Posterior cingulate gyrus (tissue), 11 donors: ENCODE measurements at regions of chr10 and their contacts with region 1.

Region 1: DNA sequence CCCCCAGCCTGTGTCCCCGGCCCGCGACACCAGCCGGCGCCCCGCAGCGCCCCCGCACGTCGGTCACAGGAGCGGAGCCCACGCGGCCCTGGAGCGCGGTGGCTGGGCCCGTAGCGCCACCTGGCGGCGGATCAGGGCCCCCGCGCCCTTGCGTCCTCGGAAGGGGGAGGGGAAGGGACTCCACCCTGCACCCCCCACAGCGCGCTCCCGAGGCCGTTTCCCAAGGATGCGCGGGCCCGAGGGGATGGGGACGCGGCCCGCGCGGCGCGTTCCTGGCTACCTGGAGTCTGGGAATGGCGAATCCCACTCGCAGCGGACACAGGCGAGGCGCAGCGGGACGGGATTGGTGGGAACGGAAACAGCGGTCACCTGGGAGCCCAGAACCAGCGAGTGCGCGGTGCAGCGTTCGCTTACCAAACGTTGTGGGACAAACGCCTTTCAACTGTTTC is 23.8 kb upstream of the MKI67 start:
- DNase-seq: peak in 9 of 10 donors; percentile 51 to 94 (median 55)

Region 2: GRCh38 chr10:127338399-127339110 is 811.5 kb before region 1 on chr10:
- intact Hi-C with region 1: no loop called
- DNase-seq: no peak

Region 3: GRCh38 chr10:128078136-128078969 is 71.7 kb before region 1 on chr10:
- intact Hi-C with region 1: loop called (anchors 1 kb)
- DNase-seq: peak in 5 of 10 donors; percentile 27 to 91 (median 58)